Thyroid gland (tissue), 4 donors: ENCODE measurements at regions of chr12 and their contacts with region 1.

Region 1: DNA sequence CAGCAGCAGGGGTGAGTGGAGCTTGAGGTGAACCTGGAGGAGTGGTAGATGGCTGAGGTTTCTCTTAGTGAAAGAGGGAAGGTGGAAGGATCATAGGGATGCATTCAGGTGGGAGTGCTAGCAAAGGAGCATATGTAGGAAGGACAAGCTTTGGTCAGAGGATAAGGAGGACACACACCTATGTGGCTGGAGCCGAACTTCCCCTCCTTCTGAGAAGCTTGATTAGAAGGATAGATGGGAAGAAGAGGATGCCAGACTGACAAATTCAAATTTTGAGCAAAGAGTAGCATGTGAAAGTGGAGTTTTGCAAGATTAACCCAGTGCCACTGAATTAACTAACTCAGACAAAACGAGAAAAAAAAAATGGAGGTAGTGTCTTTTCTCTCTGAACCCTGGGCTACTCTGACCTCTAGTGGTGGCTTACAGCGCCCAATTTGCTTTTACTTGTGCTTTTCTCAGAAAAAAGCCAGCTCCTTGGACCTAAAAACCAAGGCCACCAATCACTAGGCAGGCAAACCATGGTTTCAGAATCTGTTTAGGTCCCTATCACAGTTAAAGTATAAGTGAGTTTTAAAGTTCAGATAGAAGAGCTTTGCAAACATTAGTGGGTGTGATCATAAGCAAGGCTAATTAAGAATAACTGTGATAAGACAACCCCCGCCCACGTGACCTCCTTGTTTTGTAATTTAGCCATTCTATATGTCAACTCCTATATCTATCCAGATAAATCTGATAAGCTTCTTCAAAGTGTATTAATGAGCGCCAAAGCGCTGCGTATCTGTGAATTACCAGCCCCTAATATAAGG is 15.5 kb downstream of the EMP1 start:
- DNase-seq: peak; percentile 68 to 73
- H3K4me3 ChIP-seq: no peak overlapping the region
- H3K27ac ChIP-seq: peak overlapping the region in 2 of 3 donors; percentile 20 to 73
- H3K4me1 ChIP-seq: peaks cover 40 to 49% of the 10 kb centered on the region in 2 donors
- H3K27me3 ChIP-seq: no peaks in the 10 kb centered on the region
- CTCF ChIP-seq: peak; percentile 40 to 86 (median 67)
- POLR2A ChIP-seq: no peak

Region 2: DNA sequence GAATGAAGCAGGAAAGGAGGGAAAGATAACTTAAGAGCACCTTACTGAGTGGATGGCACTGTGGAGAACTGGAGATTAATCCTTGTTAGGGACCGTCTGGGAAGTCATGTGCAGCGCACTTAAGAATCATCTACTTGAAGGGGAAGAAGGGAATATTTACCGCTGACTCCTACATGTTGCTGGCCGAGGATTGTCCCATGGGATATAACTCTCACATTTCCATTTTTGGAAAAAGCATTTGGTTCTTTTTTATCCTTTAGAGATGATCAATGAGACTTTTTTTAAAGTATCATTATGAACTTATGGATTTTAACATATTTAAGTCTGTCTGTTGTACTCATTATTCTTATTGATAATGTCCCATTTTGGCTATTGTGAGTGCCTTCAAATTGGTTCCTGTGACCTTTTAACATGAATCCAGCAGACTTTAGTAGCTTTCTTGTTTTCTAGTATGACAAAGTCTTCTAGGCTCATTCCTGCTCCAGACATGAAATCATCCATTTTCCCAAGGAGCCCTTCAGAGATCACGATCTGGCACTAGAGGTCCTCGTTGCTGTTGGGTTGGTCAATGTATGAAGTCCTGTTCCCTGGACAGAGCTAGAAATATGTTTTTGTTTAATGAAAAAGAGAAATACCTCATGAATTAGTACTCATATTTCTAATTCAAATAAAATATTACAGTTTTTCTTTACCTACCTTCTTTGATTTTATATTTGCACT is 188.1 kb before region 1 on chr12:
- intact Hi-C with region 1: loop called (anchors 5 kb)
- DNase-seq: peak; percentile 34 to 60
- H3K4me3 ChIP-seq: no peak overlapping the region
- H3K27ac ChIP-seq: no peak overlapping the region
- H3K4me1 ChIP-seq: peaks cover 0 to 3% of the 10 kb centered on the region in 2 donors
- H3K27me3 ChIP-seq: no peaks in the 10 kb centered on the region
- CTCF ChIP-seq: peak; percentile 10 to 62 (median 46)
- POLR2A ChIP-seq: no peak

Region 3: DNA sequence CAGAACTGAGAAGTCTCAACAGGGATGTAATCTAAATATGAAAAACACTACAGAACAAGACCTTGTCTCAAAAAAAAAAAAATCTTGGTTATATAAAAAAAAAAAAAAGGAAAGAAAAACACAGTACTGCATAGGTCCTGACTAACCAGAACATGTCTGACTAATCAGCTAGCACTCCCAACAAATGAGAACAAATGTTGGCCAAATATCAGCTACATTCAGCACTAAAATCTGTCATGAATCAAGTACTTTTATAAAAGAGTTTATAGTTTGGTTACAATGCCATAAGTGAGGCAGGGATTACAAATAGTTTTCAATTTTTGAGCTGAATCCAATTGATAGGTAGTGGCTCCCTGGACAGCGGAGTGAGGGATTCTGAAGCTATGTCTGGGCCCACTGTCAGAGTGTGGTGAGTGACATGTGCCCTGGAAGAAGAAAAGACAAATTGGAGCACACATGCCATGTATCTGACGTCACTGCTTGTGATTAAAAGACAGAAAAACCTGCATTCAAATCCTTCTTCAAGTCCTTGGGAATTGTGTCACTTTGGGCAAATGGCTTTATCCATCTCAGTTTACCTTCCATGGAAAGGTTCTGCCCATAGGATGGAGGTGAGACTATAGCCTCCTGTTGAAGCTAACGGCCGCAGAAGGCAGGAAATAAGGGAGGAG is 173.4 kb before region 1 on chr12:
- intact Hi-C with region 1: no loop called
- DNase-seq: no peak
- H3K4me3 ChIP-seq: no peak overlapping the region
- H3K27ac ChIP-seq: peak overlapping the region; percentile 85 to 97 (median 87)
- H3K4me1 ChIP-seq: peaks cover 42 to 53% of the 10 kb centered on the region in 2 donors
- H3K27me3 ChIP-seq: no peaks in the 10 kb centered on the region
- CTCF ChIP-seq: no peak
- POLR2A ChIP-seq: no peak

Region 4: DNA sequence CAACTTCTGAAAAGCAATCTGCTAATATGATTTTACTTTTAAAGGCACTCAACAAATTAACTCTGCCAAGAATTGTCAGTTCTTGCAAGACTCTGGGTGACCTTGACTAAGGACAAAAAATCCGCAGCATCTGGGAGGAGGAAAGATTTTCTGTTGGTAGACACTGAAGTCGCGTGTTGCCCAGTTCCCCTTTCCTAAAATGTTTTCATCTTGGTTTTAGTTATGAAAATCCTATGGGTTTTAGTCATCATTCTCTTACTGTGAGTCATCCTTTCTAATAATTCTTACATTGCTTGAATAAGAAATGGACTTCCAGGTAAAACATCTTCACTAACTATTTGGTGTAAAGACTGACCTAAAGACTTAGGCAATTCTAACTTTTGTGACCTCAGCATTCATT is 117.7 kb before region 1 on chr12:
- intact Hi-C with region 1: loop called (anchors 5 kb)
- DNase-seq: no peak
- H3K4me3 ChIP-seq: no peak overlapping the region
- H3K27ac ChIP-seq: peak overlapping the region in 1 of 3 donors; percentile 21
- H3K4me1 ChIP-seq: peaks cover 24 to 34% of the 10 kb centered on the region in 2 donors
- H3K27me3 ChIP-seq: no peaks in the 10 kb centered on the region
- CTCF ChIP-seq: no peak
- POLR2A ChIP-seq: no peak